ENCODE measurements at regions of chr2 and their contacts with region 1.

Region 1: GRCh38 chr2:233223059-233223894 is 28.2 kb upstream of the ATG16L1 start:
- DNase-seq: peak; percentile 86
- H3K4me3 ChIP-seq: no peak overlapping the region
- H3K27ac ChIP-seq: peak overlapping the region; percentile 80
- H3K4me1 ChIP-seq: peaks cover 70% of the 10 kb centered on the region
- CTCF ChIP-seq: no peak

Region 2: GRCh38 chr2:233193738-233194137 is 29.5 kb before region 1 on chr2:
- CTCF ChIA-PET with region 1: no interaction called
- POLR2A ChIA-PET with region 1: no interaction called
- intact Hi-C with region 1: no loop called
- DNase-seq: no peak
- H3K4me3 ChIP-seq: no peak overlapping the region
- H3K27ac ChIP-seq: no peak overlapping the region
- H3K4me1 ChIP-seq: no peaks in the 10 kb centered on the region
- CTCF ChIP-seq: no peak

Region 3: DNA sequence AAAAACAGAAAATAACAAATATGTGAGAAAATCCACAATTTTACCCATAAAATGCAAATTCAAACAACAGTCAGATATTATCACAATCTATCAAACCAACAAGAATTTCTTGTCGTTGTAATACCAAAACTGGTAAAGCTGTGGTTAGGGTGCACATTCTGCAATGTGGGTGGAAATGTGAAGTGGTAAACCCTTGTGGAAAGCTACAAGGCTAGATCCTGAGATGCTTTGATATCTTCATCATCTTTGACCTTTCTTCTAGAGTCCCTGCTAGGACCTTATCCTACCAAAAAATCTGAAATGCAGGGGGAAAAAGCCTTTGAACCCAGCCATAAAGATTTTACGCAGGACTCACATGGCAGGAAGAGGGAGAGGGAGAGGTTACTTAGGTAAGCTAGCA is 11.0 kb after region 1 on chr2:
- CTCF ChIA-PET with region 1: interaction called, 3 read pairs
- POLR2A ChIA-PET with region 1: interaction called, 10 read pairs
- intact Hi-C with region 1: no loop called
- DNase-seq: no peak
- H3K4me3 ChIP-seq: no peak overlapping the region
- H3K27ac ChIP-seq: no peak overlapping the region
- H3K4me1 ChIP-seq: peaks cover 4% of the 10 kb centered on the region
- CTCF ChIP-seq: no peak

Region 4: DNA sequence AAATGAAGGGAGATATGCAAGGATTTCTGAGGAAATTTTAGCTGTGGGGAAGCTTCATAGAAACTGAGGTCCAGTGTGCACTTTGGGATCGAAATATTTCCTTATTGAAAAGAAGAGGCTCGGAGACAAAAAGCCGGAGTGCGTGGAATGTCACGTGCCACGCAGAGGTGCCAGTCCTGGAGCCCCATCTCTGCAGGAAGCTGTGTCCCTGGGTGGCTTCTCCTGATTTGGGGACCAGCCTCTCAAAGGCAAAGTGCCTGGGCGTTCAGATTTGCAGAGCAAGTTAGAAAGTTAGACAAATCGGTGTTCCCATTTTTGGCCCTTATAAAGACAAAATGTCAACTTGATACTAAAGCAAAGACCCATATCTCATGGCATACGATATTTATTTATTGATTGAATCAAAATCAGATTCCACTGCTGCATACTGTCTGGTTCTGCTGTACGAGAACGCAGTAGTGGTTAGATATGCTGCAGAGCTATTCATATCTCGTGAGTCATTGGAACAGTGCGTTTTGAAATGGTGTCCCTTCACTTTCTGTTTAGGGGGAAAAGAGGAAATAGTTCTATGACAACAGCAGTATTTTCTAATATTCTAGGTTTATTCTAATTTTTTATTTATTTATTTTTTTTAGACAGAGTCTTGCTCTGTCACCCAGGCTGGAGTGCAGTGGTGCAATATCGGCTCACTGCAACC is 19.1 kb after region 1 on chr2:
- CTCF ChIA-PET with region 1: interaction called, 3 read pairs
- POLR2A ChIA-PET with region 1: interaction called, 17 read pairs
- intact Hi-C with region 1: no loop called
- DNase-seq: no peak
- H3K4me3 ChIP-seq: no peak overlapping the region
- H3K27ac ChIP-seq: no peak overlapping the region
- H3K4me1 ChIP-seq: peaks cover 38% of the 10 kb centered on the region
- CTCF ChIP-seq: no peak